ENCODE measurements at regions of chr1 and their contacts with region 1.

Region 1: DNA sequence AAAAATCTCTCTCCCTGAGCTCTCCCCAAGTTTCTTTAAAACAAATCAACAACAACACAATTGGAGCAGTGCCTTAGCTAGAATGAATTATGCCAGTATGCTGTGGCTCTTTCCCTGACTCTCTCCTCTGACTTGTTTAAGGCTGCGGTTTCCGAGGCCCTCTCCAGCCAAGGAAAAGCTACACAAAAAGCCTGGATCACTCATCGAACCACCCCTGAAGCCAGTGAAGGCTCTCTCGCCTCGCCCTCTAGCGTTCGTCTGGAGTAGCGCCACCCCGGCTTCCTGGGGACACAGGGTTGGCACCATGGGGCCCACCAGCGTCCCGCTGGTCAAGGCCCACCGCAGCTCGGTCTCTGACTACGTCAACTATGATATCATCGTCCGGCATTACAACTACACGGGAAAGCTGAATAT is 1.9 kb downstream of the S1PR1 start:
- DNase-seq: peak; percentile 74 to 88 (median 83)
- ATAC-seq: peak; percentile 67
- H3K4me3 ChIP-seq: peak overlapping the region; percentile 88
- H3K4me3 Mint-ChIP-seq: peak overlapping the region; percentile 90 to 100 (median 98)
- H3K27ac ChIP-seq: peak overlapping the region; percentile 94
- H3K27ac Mint-ChIP-seq: peak overlapping the region; percentile 93 to 100 (median 99)
- H3K4me1 ChIP-seq: peaks cover 37 to 42% of the 10 kb centered on the region in 2 donors
- H3K4me1 Mint-ChIP-seq: peaks cover 43 to 68% (median 56%) of the 10 kb centered on the region in 7 donors
- H3K27me3 ChIP-seq: no peaks in the 10 kb centered on the region
- H3K27me3 Mint-ChIP-seq: peaks cover 0 to 4% (median 0%) of the 10 kb centered on the region in 5 donors

Region 2: GRCh38 chr1:100895540-100896483 is 342.9 kb before region 1 on chr1 and contains the start of gene SLC30A7:
- CTCF ChIA-PET with region 1: no interaction called
- POLR2A ChIA-PET with region 1: interaction called, 13 read pairs
- intact Hi-C with region 1: loop called (anchors 1 kb)
- DNase-seq: peak; percentile 93 to 99 (median 94)
- ATAC-seq: peak; percentile 90
- H3K4me3 ChIP-seq: peak within 1 kb of the TSS; percentile 96
- H3K4me3 Mint-ChIP-seq: peak within 1 kb of the TSS; percentile 91 to 100 (median 99)
- H3K27ac ChIP-seq: peak within 1 kb of the TSS; percentile 95
- H3K27ac Mint-ChIP-seq: peak within 1 kb of the TSS; percentile 95 to 100 (median 99)
- H3K4me1 ChIP-seq: peaks cover 7 to 10% of the 10 kb centered on the region in 2 donors
- H3K4me1 Mint-ChIP-seq: peaks cover 17 to 58% (median 50%) of the 10 kb centered on the region in 7 donors
- H3K27me3 ChIP-seq: no peaks in the 10 kb centered on the region
- H3K27me3 Mint-ChIP-seq: no peaks in the 10 kb centered on the region
- total RNA-seq, gene SLC30A7: 29.9 to 44.5 (median 38.8) TPM

Region 3: DNA sequence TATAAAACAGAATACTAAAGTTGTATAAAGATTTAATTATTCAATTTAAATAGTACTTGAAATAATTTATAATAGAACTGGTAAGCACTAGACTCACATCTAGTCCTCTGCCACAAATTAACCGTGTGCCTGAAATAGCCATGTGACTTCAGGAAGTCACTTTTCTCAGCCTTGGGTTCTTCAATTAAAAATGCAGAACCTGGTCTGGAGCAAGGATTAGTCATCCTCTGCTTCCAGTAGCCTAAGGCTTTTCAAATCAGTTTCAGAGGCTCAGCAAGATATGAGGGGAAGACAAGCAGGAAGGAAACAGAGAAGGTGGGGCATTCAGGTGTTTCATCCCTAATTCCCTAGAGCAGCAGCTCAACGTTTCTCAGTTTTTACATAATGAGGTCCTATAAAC is 236.1 kb before region 1 on chr1:
- CTCF ChIA-PET with region 1: no interaction called
- POLR2A ChIA-PET with region 1: interaction called, 4 read pairs
- intact Hi-C with region 1: loop called in 1 of 2 experiments (anchors 1 kb)
- DNase-seq: no peak
- ATAC-seq: peak; percentile 57
- H3K4me3 ChIP-seq: no peak overlapping the region
- H3K4me3 Mint-ChIP-seq: peak overlapping the region in 7 of 10 donors; percentile 5 to 60 (median 29)
- H3K27ac ChIP-seq: no peak overlapping the region
- H3K27ac Mint-ChIP-seq: peak overlapping the region in 7 of 9 donors; percentile 41 to 95 (median 85)
- H3K4me1 ChIP-seq: peaks cover 28 to 47% of the 10 kb centered on the region in 2 donors
- H3K4me1 Mint-ChIP-seq: peaks cover 42 to 74% (median 56%) of the 10 kb centered on the region in 7 donors
- H3K27me3 ChIP-seq: no peaks in the 10 kb centered on the region
- H3K27me3 Mint-ChIP-seq: no peaks in the 10 kb centered on the region

Region 4: DNA sequence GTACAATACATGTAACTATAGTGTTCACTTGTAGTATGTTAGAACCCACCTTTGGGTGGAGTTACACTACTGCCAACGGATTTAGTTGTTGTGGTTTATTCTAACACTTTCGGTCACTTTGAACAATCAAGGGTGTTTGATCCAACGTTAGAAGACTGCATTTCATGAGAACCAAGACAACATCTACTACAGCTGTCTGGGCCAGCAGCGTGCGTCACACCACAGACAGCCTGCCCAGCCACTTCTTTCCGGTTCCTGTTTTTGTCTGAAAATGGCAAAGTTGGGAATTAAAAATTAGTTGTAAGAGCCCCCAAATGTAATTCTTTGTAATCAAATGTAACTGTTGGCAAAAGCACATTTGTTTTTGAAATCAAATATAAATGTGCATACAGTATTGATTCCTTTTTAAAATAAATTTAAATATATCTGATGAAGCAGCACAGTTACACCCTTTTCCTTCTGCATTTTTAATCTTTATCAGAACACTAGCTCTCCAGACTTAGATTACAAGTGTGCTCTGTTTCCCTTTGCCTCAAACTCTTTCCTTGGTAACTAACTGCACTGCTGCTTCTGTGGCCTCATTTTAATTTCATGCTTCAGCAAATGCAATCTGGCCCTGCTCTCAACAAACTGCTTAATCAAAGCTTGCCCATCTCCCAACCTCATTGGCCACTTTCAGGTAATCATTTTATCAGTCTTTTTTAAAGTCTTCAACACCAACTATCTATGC is 126.5 kb before region 1 on chr1:
- CTCF ChIA-PET with region 1: interaction called, 3 read pairs
- POLR2A ChIA-PET with region 1: interaction called, 77 read pairs
- intact Hi-C with region 1: loop called (anchors 1 kb)
- DNase-seq: peak; percentile 29 to 95 (median 91)
- ATAC-seq: peak; percentile 97
- H3K4me3 ChIP-seq: peak overlapping the region; percentile 33
- H3K4me3 Mint-ChIP-seq: peak overlapping the region; percentile 32 to 85 (median 78)
- H3K27ac ChIP-seq: peak overlapping the region; percentile 84
- H3K27ac Mint-ChIP-seq: peak overlapping the region; percentile 95 to 100 (median 99)
- H3K4me1 ChIP-seq: peaks cover 23 to 43% of the 10 kb centered on the region in 2 donors
- H3K4me1 Mint-ChIP-seq: peaks cover 32 to 79% (median 71%) of the 10 kb centered on the region in 7 donors
- H3K27me3 ChIP-seq: no peaks in the 10 kb centered on the region
- H3K27me3 Mint-ChIP-seq: no peaks in the 10 kb centered on the region

Region 5: GRCh38 chr1:101203820-101204540 is 34.7 kb before region 1 on chr1:
- CTCF ChIA-PET with region 1: interaction called, 3 read pairs
- POLR2A ChIA-PET with region 1: interaction called, 3 read pairs
- intact Hi-C with region 1: loop called (anchors 1 to 2 kb)
- DNase-seq: no peak
- ATAC-seq: no peak
- H3K4me3 ChIP-seq: no peak overlapping the region
- H3K4me3 Mint-ChIP-seq: no peak overlapping the region
- H3K27ac ChIP-seq: no peak overlapping the region
- H3K27ac Mint-ChIP-seq: peak overlapping the region in 1 of 9 donors; percentile 18
- H3K4me1 ChIP-seq: no peaks in the 10 kb centered on the region
- H3K4me1 Mint-ChIP-seq: peaks cover 0 to 24% (median 0%) of the 10 kb centered on the region in 7 donors
- H3K27me3 ChIP-seq: no peaks in the 10 kb centered on the region
- H3K27me3 Mint-ChIP-seq: no peaks in the 10 kb centered on the region

Region 6: GRCh38 chr1:101282314-101283038 is 43.8 kb after region 1 on chr1:
- CTCF ChIA-PET with region 1: interaction called, 110 read pairs
- POLR2A ChIA-PET with region 1: interaction called, 633 read pairs
- intact Hi-C with region 1: loop called in 1 of 2 experiments (anchors 1 kb)
- DNase-seq: no peak
- ATAC-seq: no peak
- H3K4me3 ChIP-seq: no peak overlapping the region
- H3K4me3 Mint-ChIP-seq: peak overlapping the region in 7 of 10 donors; percentile 11 to 94 (median 84)
- H3K27ac ChIP-seq: peak overlapping the region; percentile 77
- H3K27ac Mint-ChIP-seq: peak overlapping the region in 8 of 9 donors; percentile 85 to 99 (median 98)
- H3K4me1 ChIP-seq: peaks cover 92 to 95% of the 10 kb centered on the region in 2 donors
- H3K4me1 Mint-ChIP-seq: peaks cover 67 to 96% (median 95%) of the 10 kb centered on the region in 7 donors
- H3K27me3 ChIP-seq: no peaks in the 10 kb centered on the region
- H3K27me3 Mint-ChIP-seq: peaks cover 0 to 2% (median 0%) of the 10 kb centered on the region in 5 donors

Region 7: DNA sequence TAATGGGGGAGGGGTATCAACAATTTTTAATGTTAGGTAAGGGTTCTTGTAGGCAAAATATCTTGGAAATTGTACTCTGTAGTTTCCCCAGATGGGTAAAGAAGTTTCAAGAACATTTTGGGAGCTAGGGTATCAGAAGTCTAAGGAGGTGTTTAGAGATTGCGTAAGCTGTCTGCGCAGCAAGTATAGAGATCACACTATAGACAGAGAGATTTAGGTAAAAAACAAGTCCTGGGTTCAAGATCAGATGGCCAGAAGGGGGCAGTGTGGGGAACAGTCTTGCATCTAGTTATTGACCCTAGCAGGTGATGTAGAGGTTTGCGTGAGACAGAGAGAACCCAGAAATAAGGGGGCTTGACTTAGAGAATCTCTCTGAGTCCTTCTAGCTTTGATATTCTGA is 78.9 kb after region 1 on chr1:
- CTCF ChIA-PET with region 1: no interaction called
- POLR2A ChIA-PET with region 1: no interaction called
- intact Hi-C with region 1: no loop called
- DNase-seq: no peak
- ATAC-seq: no peak
- H3K4me3 ChIP-seq: no peak overlapping the region
- H3K4me3 Mint-ChIP-seq: no peak overlapping the region
- H3K27ac ChIP-seq: no peak overlapping the region
- H3K27ac Mint-ChIP-seq: no peak overlapping the region
- H3K4me1 ChIP-seq: peaks cover 4% of the 10 kb centered on the region in 2 donors
- H3K4me1 Mint-ChIP-seq: peaks cover 4 to 27% (median 10%) of the 10 kb centered on the region in 7 donors
- H3K27me3 ChIP-seq: no peaks in the 10 kb centered on the region
- H3K27me3 Mint-ChIP-seq: peaks cover 0 to 56% (median 0%) of the 10 kb centered on the region in 5 donors

Region 8: DNA sequence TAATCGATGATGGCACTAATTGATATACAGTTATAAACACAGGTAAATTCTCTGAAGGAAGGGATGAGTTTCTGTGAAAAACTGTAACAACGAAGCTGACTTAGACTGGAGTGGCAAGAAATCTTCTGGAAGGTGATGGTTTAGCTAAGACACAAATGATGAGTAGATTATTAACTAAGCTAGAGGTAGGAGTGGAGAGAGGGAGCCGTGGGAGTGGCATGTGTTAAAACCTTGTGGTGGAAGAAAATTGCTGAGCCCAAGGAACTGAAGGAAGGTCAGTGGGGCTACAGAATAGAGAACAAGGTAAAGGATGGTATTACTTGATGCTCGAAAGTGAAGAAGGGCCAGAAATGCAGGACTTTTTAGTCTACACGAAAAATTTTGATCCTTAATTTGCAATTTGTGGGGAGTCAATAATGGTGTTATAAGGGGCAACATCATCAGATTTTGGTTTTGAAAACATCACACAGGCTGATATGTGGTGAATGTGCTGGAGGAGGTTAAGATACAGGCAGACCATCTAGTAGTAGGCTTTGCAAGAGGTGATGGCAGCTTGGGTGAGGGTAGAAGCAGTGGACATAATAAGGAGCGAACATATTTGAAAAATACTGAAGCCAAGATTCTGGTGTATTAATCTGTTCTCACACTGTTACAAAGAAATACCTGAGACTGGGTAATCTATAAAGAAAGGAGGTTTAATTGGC is 91.9 kb after region 1 on chr1:
- CTCF ChIA-PET with region 1: no interaction called
- POLR2A ChIA-PET with region 1: no interaction called
- intact Hi-C with region 1: no loop called
- DNase-seq: no peak
- ATAC-seq: no peak
- H3K4me3 ChIP-seq: no peak overlapping the region
- H3K4me3 Mint-ChIP-seq: no peak overlapping the region
- H3K27ac ChIP-seq: no peak overlapping the region
- H3K27ac Mint-ChIP-seq: peak overlapping the region in 1 of 9 donors; percentile 13
- H3K4me1 ChIP-seq: peaks cover 0 to 6% of the 10 kb centered on the region in 2 donors
- H3K4me1 Mint-ChIP-seq: peaks cover 0 to 26% (median 0%) of the 10 kb centered on the region in 7 donors
- H3K27me3 ChIP-seq: no peaks in the 10 kb centered on the region
- H3K27me3 Mint-ChIP-seq: peaks cover 0 to 23% (median 0%) of the 10 kb centered on the region in 5 donors

Measured in naive thymus-derived CD4-positive, alpha-beta T cell (primary cell).